ENCODE measurements at regions of chr1 and their contacts with region 1.

Region 1: DNA sequence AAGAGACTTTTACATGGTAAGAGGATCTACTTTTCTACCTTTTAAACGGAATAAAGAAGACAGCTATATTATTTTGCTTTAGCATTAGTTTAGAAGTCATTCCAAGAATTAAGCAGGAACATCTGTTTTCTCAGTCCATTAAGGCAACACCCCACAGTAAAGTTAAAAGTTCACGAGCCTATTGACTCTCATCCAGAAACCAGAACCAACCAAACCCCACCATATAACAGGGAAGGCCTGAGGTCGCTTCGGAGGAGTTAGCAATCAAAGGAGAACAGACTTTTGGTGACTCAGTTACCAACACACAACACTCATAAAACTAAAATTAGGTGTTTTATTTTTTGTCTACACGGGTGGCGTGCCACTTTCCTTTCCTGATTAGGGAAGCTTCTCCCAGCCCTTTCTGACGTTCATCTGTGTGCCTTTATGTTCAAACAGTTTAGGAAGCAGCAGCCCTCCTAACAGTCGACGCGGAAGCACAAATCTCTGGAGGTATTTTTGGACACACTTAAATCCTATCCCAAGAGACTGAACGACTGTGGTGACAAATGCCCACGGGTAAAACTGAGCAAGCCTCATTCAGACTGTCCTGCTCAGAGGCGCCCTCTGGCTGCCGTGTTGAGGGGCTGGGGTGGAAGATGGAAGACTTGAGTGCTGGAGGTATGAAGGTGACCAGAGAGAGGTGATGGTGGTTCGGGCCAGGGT is 8.6 kb upstream of the PLA2G2C start:
- DNase-seq: peak; percentile 45 to 54
- ATAC-seq: peak; percentile 68 to 91
- H3K4me3 ChIP-seq: peak overlapping the region in 2 of 4 donors; percentile 14 to 37
- H3K27ac ChIP-seq: peak overlapping the region in 1 of 4 donors; percentile 45
- H3K4me1 ChIP-seq: peaks cover 4 to 22% of the 10 kb centered on the region in 2 donors
- H3K27me3 ChIP-seq: peaks cover 2 to 14% (median 3%) of the 10 kb centered on the region in 3 donors
- CTCF ChIP-seq: peak; percentile 60 to 82 (median 74)
- POLR2A ChIP-seq: no peak

Region 2: GRCh38 chr1:19918057-19918456 is 276.9 kb before region 1 on chr1:
- in situ Hi-C with region 1: loop called in 1 of 4 experiments (anchors 10 kb)
- intact Hi-C with region 1: loop called (anchors 1 kb)
- DNase-seq: peak; percentile 38 to 62
- ATAC-seq: peak; percentile 66 to 77
- H3K4me3 ChIP-seq: no peak overlapping the region
- H3K27ac ChIP-seq: no peak overlapping the region
- H3K4me1 ChIP-seq: no peaks in the 10 kb centered on the region
- H3K27me3 ChIP-seq: no peaks in the 10 kb centered on the region
- CTCF ChIP-seq: peak; percentile 70 to 88 (median 81)
- POLR2A ChIP-seq: no peak

Region 3: GRCh38 chr1:20100632-20101355 is 94.1 kb before region 1 on chr1:
- in situ Hi-C with region 1: no loop called
- intact Hi-C with region 1: loop called (anchors 2 kb)
- DNase-seq: peak in 1 of 2 donors; percentile 21
- ATAC-seq: peak; percentile 61
- H3K4me3 ChIP-seq: no peak overlapping the region
- H3K27ac ChIP-seq: no peak overlapping the region
- H3K4me1 ChIP-seq: no peaks in the 10 kb centered on the region
- H3K27me3 ChIP-seq: no peaks in the 10 kb centered on the region
- CTCF ChIP-seq: peak in 4 of 5 experiments; percentile 38 to 56 (median 48)
- POLR2A ChIP-seq: no peak

Region 4: GRCh38 chr1:20124456-20125057 is 70.4 kb before region 1 on chr1:
- in situ Hi-C with region 1: no loop called
- intact Hi-C with region 1: no loop called
- DNase-seq: no peak
- ATAC-seq: peak; percentile 74 to 80
- H3K4me3 ChIP-seq: no peak overlapping the region
- H3K27ac ChIP-seq: no peak overlapping the region
- H3K4me1 ChIP-seq: no peaks in the 10 kb centered on the region
- H3K27me3 ChIP-seq: peaks cover 0 to 3% (median 0%) of the 10 kb centered on the region in 3 donors
- CTCF ChIP-seq: no peak
- POLR2A ChIP-seq: no peak